ENCODE measurements at regions of chr12 and their contacts with region 1.

Region 1: DNA sequence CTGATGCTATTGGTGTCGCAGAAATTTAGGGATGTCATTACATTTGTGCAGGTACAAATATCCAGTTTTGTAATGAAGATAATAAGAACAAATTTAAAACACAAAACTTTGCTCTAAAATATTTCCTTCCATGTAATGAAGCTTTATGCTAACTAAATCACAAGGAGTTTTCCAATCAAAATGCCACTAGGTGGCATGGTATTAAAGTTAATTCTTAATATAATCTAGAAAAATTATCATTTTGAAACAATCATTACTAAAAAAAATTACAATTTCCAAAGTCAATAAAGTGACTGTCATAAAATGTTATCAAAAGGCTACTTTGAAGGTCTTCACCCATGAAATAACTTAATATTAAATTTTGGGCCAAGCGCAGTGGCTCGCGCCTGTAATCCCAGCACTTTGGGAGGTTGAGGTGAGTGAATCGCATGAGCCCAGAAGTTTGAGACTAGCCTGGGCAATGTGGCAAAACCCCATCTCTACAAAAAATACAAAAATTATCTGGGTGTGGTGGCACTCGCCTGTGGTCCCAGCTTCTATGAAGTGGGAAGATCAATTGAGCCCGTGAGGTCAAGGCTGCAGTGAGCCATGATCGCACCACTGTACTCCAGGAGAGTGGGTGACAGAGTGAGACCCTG is 77.4 kb downstream of the KIF21A start:
- DNase-seq: no peak
- H3K4me3 ChIP-seq: no peak overlapping the region
- H3K4me3 Mint-ChIP-seq: no peak overlapping the region
- H3K27ac ChIP-seq: no peak overlapping the region
- H3K27ac Mint-ChIP-seq: no peak overlapping the region
- H3K4me1 ChIP-seq: no peaks in the 10 kb centered on the region
- H3K4me1 Mint-ChIP-seq: peaks cover 0 to 1% (median 0%) of the 10 kb centered on the region in 4 donors
- H3K27me3 ChIP-seq: no peaks in the 10 kb centered on the region
- H3K27me3 Mint-ChIP-seq: no peaks in the 10 kb centered on the region

Region 2: GRCh38 chr12:39095636-39096330 is 269.7 kb before region 1 on chr12:
- CTCF ChIA-PET with region 1: no interaction called
- POLR2A ChIA-PET with region 1: no interaction called
- intact Hi-C with region 1: no loop called
- DNase-seq: no peak
- H3K4me3 ChIP-seq: no peak overlapping the region
- H3K4me3 Mint-ChIP-seq: no peak overlapping the region
- H3K27ac ChIP-seq: no peak overlapping the region
- H3K27ac Mint-ChIP-seq: no peak overlapping the region
- H3K4me1 ChIP-seq: no peaks in the 10 kb centered on the region
- H3K4me1 Mint-ChIP-seq: no peaks in the 10 kb centered on the region
- H3K27me3 ChIP-seq: no peaks in the 10 kb centered on the region
- H3K27me3 Mint-ChIP-seq: peaks cover 8% of the 10 kb centered on the region in 2 donors

Region 3: GRCh38 chr12:39300799-39301198 is 64.7 kb before region 1 on chr12:
- CTCF ChIA-PET with region 1: no interaction called
- POLR2A ChIA-PET with region 1: no interaction called
- intact Hi-C with region 1: no loop called
- DNase-seq: no peak
- H3K4me3 ChIP-seq: no peak overlapping the region
- H3K4me3 Mint-ChIP-seq: no peak overlapping the region
- H3K27ac ChIP-seq: no peak overlapping the region
- H3K27ac Mint-ChIP-seq: no peak overlapping the region
- H3K4me1 ChIP-seq: no peaks in the 10 kb centered on the region
- H3K4me1 Mint-ChIP-seq: peaks cover 0 to 2% (median 0%) of the 10 kb centered on the region in 4 donors
- H3K27me3 ChIP-seq: no peaks in the 10 kb centered on the region
- H3K27me3 Mint-ChIP-seq: no peaks in the 10 kb centered on the region

Region 4: GRCh38 chr12:39383114-39383513 is 17.6 kb after region 1 on chr12:
- CTCF ChIA-PET with region 1: no interaction called
- POLR2A ChIA-PET with region 1: no interaction called
- intact Hi-C with region 1: loop called (anchors 2 kb)
- DNase-seq: no peak
- H3K4me3 ChIP-seq: no peak overlapping the region
- H3K4me3 Mint-ChIP-seq: no peak overlapping the region
- H3K27ac ChIP-seq: no peak overlapping the region
- H3K27ac Mint-ChIP-seq: no peak overlapping the region
- H3K4me1 ChIP-seq: no peaks in the 10 kb centered on the region
- H3K4me1 Mint-ChIP-seq: peaks cover 0 to 9% (median 3%) of the 10 kb centered on the region in 4 donors
- H3K27me3 ChIP-seq: no peaks in the 10 kb centered on the region
- H3K27me3 Mint-ChIP-seq: no peaks in the 10 kb centered on the region

Measured in CD4-positive, alpha-beta memory T cell (primary cell).